Calu3 (cell line): ENCODE measurements at regions of chr11 and their contacts with region 1.

Region 1: DNA sequence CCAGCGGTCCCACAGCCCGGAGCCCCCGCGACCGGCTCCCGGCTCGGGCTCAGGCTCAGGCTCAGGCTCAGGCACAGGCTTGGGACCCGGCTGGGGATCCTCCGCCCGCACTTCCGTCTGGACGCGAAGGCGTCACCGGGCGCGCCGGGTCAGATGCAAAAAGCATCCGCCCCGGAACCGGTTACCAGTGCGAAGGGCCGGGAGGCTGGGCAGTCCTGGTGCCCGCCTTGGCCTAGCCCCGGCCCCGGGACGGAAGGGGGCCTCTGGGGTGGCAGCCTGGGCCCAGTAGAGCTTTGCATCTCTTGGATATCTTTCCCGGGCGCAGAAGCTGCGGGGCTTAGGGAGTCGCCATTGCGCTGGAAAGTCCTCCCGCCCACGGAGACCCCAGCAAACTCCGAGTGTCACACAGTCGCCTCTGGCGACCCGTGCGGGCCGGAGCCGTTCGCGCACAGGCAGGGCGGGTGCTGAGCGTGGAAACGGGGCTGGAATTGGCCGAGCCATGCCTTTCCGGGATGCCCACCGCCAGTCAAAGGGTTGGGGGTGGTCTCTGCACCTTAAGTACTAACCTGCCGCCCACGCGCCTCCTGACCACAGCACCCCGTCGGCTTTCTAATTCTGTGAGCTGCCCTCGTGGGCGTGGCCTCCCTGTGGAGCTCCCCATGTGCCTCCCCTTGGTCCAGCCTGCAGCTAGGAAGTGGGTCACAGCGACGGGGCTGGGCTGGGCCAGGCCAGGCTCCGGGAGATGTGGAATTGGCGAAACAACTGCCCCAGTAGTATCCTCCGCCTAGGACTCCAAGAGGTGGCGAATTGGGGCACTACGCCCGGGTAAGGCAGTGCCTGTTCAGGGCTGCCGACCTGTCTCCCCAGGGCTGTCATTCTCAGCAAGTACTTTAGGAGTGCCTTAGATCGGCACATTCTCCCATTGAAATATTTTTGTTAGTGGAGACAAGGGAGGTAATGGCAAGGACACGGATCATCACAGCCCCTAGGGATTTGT is at the start of gene TMEM9B:
- DNase-seq: peak; percentile 92
- H3K4me3 Mint-ChIP-seq: peak within 1 kb of the TSS; percentile 83
- H3K27ac Mint-ChIP-seq: peak within 1 kb of the TSS; percentile 87
- H3K4me1 Mint-ChIP-seq: peaks cover 22% of the 10 kb centered on the region
- H3K27me3 Mint-ChIP-seq: no peaks in the 10 kb centered on the region
- CTCF ChIP-seq: no peak
- total RNA-seq, gene TMEM9B: 31.3 and 31.5 TPM in 2 replicates

Region 2: DNA sequence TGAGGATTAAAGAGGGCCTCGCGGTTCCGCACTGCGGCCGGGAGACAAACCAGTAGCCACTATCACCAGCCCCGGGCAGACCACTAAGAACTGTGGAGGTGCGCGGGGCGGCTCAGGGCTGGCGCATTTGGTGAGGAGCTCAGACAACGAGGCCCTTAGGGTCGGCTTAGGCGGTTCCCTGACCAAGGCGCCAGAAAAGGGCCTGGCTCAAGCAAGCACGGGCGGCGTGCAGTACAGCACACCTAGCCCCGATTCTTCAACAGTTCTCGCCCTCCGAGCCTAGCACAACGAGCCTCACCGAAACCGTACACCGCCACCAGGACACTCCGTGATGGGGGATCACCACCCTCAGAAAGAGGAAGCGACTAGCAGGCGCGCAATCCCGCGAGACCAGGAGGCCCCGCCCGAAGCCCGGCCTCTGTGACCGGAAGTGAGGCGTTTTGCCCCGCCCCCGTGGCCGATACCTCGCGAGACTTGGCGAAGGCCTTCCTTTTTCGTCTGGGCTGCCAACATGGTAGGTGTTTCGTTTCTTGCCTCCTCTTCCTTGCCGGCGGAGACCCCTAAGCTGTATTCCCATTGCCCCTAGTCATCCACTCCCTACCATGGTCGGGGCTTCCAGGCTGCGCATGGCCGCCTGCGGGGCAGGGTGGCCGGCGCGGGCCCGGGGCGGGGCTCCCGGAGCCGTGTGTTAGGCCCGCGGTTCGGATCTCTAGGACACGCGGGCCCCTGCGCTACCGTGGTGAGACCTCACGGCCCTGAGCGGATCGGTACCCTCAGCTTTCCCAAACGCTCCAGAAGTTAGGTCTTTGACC is 282.1 kb before region 1 on chr11 and contains the starts of genes RPL27A and TRIM66:
- CTCF ChIA-PET with region 1: no interaction called
- intact Hi-C with region 1: loop called (anchors 1 kb)
- DNase-seq: peak; percentile 99
- H3K4me3 Mint-ChIP-seq: peak within 1 kb of the TSS; percentile 89
- H3K27ac Mint-ChIP-seq: peak within 1 kb of the TSS; percentile 88
- H3K4me1 Mint-ChIP-seq: peaks cover 23% of the 10 kb centered on the region
- H3K27me3 Mint-ChIP-seq: no peaks in the 10 kb centered on the region
- CTCF ChIP-seq: no peak
- total RNA-seq, gene RPL27A: 571 and 585 TPM in 2 replicates
- total RNA-seq, gene TRIM66: 14.0 and 19.5 TPM in 2 replicates

Region 3: GRCh38 chr11:8913961-8914660 is 50.5 kb before region 1 on chr11:
- CTCF ChIA-PET with region 1: interaction called, 17 read pairs
- intact Hi-C with region 1: loop called (anchors 1 kb)
- DNase-seq: peak; percentile 36
- H3K4me3 Mint-ChIP-seq: no peak overlapping the region
- H3K27ac Mint-ChIP-seq: no peak overlapping the region
- H3K4me1 Mint-ChIP-seq: peaks cover 12% of the 10 kb centered on the region
- H3K27me3 Mint-ChIP-seq: no peaks in the 10 kb centered on the region
- CTCF ChIP-seq: peak; percentile 70

Region 4: GRCh38 chr11:9017773-9018172 is 53.2 kb after region 1 on chr11:
- CTCF ChIA-PET with region 1: no interaction called
- intact Hi-C with region 1: no loop called
- DNase-seq: no peak
- H3K4me3 Mint-ChIP-seq: no peak overlapping the region
- H3K27ac Mint-ChIP-seq: no peak overlapping the region
- H3K4me1 Mint-ChIP-seq: no peaks in the 10 kb centered on the region
- H3K27me3 Mint-ChIP-seq: peaks cover 43% of the 10 kb centered on the region
- CTCF ChIP-seq: no peak

Region 5: GRCh38 chr11:9137293-9138132 is 172.9 kb after region 1 on chr11:
- CTCF ChIA-PET with region 1: interaction called, 11 read pairs
- intact Hi-C with region 1: no loop called
- DNase-seq: peak; percentile 81
- H3K4me3 Mint-ChIP-seq: no peak overlapping the region
- H3K27ac Mint-ChIP-seq: peak overlapping the region; percentile 8
- H3K4me1 Mint-ChIP-seq: peaks cover 34% of the 10 kb centered on the region
- H3K27me3 Mint-ChIP-seq: no peaks in the 10 kb centered on the region
- CTCF ChIP-seq: peak; percentile 75